ENCODE measurements at regions of chr2 and their contacts with region 1.

Region 1: GRCh38 chr2:111897924-111898702 is at the start of gene MERTK:
- DNase-seq: peak; percentile 92
- H3K4me3 ChIP-seq: peak within 1 kb of the TSS; percentile 72 to 99 (median 95)
- H3K27ac ChIP-seq: peak within 1 kb of the TSS; percentile 64
- H3K4me1 ChIP-seq: peaks cover 28% of the 10 kb centered on the region
- H3K27me3 ChIP-seq: no peaks in the 10 kb centered on the region
- CTCF ChIP-seq: peak; percentile 52 to 76
- POLR2A ChIP-seq: peak; percentile 88
- total RNA-seq, gene MERTK: 37.3 TPM in 2 replicates

Region 2: DNA sequence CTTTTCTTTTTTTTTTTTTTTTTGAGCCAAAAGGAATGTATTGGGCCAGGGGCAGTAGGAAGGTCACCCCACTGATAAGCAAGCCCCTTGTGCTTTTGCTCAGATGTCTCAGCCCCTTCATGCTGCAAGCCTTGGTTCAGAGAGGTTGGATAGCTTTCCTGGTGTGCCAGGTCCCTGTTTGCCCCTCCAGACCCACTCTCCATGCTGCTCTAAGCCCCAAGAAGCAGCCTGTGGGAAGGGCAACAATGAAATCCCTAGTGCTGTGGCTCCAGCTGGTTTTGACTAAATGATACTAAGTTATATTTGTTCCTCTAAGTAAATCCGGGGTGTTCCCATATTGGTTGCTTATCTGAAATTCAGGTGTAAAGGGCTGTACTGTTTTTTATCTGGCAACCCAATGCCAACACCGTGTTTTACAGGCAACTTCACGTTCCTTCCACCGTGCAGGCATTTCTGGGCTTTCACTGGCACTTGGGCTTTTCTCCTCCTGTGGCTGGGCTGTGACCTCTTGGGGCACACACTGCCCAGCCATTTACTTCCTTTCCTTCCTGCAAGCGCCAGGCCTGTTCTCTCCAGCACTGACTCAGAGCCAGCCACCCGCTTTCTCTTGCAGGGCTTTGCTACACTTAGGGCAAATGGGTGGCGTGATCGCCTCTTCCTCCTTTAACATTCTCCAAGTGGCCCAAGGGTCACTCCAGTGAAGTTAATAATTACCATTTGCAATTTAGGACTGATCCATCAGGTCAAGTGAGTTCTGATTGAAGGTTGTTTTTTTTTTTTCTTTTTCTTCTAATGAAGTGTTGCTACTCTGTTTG is 21.9 kb after region 1 on chr2:
- CTCF ChIA-PET with region 1: interaction called, 17 read pairs
- POLR2A ChIA-PET with region 1: no interaction called
- dilution Hi-C with region 1: no loop called
- intact Hi-C with region 1: loop called (anchors 2 kb)
- DNase-seq: peak; percentile 89
- H3K4me3 ChIP-seq: no peak overlapping the region
- H3K27ac ChIP-seq: peak overlapping the region; percentile 85
- H3K4me1 ChIP-seq: peaks cover 31% of the 10 kb centered on the region
- H3K27me3 ChIP-seq: no peaks in the 10 kb centered on the region
- CTCF ChIP-seq: peak in 1 of 2 donors; percentile 3
- POLR2A ChIP-seq: peak; percentile 41

Region 3: DNA sequence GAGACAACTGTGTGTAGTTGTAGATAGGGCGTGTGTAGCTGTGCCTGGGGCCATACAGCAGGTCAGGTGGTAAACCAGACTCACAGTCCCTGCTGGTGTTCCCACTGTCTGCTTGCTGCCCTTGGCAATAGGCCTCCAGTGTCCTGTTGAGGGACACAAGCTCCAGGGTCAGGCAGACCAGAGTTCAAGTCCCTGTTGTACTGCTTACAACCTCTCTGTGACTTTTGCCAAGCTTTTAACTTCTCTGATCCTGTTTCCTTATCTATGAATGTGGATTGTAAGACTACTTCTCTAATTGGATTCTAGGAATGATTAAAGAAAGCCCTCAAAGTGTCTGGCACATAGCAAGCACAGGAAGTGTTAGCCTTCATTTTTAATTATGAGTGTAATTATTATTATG is 68.9 kb after region 1 on chr2:
- CTCF ChIA-PET with region 1: interaction called, 13 read pairs
- POLR2A ChIA-PET with region 1: interaction called, 9 read pairs
- dilution Hi-C with region 1: no loop called
- intact Hi-C with region 1: loop called (anchors 2 kb)
- DNase-seq: peak; percentile 20
- H3K4me3 ChIP-seq: no peak overlapping the region
- H3K27ac ChIP-seq: peak overlapping the region; percentile 82
- H3K4me1 ChIP-seq: peaks cover 32% of the 10 kb centered on the region
- H3K27me3 ChIP-seq: no peaks in the 10 kb centered on the region
- CTCF ChIP-seq: no peak
- POLR2A ChIP-seq: no peak

Region 4: GRCh38 chr2:111986116-111986900 is 88.2 kb after region 1 on chr2:
- CTCF ChIA-PET with region 1: interaction called, 11 read pairs
- POLR2A ChIA-PET with region 1: no interaction called
- dilution Hi-C with region 1: no loop called
- intact Hi-C with region 1: no loop called
- DNase-seq: no peak
- H3K4me3 ChIP-seq: no peak overlapping the region
- H3K27ac ChIP-seq: no peak overlapping the region
- H3K4me1 ChIP-seq: no peaks in the 10 kb centered on the region
- H3K27me3 ChIP-seq: no peaks in the 10 kb centered on the region
- CTCF ChIP-seq: no peak
- POLR2A ChIP-seq: no peak

Region 5: GRCh38 chr2:112048887-112049286 is 150.8 kb after region 1 on chr2:
- CTCF ChIA-PET with region 1: interaction called, 62 read pairs
- POLR2A ChIA-PET with region 1: no interaction called
- dilution Hi-C with region 1: no loop called
- intact Hi-C with region 1: loop called (anchors 1 kb)
- DNase-seq: peak; percentile 84
- H3K4me3 ChIP-seq: no peak overlapping the region
- H3K27ac ChIP-seq: no peak overlapping the region
- H3K4me1 ChIP-seq: peaks cover 5% of the 10 kb centered on the region
- H3K27me3 ChIP-seq: peaks cover 0 to 1% of the 10 kb centered on the region in 2 experiments
- CTCF ChIP-seq: peak; percentile 48 to 69
- POLR2A ChIP-seq: no peak

Measured in endothelial cell of umbilical vein (primary cell).